GM10248 (cell line): ENCODE measurements at regions of chr18 and their contacts with region 1.

Region 1: DNA sequence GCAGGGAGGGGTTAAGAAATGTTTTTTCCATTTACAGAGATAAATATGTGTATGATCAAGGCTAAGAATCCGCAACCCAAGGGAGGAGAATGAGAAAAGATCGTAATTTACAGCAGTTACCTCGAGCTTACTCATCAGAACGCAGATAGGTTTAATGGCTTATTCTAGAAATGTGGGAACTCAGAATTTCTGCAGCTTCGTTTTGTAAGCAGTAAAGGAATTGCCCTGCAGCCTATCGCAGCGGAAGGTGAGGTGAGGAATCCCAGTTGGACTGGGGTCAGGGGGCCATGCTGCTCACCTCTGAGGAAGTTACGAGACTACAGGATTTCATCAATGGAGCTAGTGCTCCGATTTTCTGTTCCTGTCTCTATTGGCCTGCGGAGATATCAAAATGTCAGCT is 8.1 kb upstream of the TMEM200C start:
- DNase-seq: no peak
- CTCF ChIP-seq: no peak

Region 2: DNA sequence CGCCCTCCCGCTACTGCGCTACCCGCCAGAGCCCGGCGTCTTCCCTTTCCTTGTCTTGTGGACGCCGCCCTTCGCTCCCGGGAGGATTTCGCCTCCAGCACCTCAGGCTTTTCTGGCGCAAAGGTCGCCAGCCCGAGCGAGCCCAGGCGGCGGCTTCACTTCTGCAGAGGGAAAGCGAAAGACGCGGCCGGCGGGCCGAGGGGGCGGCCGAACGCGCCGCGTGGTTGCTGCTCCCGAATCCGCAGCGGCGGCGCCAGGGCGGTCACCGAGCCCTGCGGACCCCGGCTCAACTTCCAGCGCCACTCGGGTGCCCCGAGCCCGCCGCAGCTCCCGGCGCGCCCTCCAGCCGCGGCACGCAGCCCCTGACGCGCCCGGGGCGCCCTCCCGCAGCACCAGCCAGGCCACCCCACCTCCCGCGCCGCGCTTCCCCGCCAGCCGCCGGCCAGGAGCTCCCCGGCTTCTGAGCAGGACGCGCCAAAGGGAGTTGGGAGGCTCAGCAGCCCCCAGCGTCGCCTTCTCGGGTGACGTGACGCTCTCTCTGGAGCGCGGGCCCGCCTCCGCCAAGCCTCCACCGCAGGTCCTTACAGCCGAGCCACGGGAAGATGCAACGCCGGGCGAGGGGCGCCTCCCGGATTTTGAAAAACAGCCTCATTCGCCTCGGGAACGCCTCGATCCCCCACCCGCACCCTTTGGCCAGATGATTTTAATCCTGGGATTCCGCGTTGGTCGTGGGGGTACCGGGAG is 274.7 kb before region 1 on chr18:
- CTCF ChIA-PET with region 1: no interaction called
- POLR2A ChIA-PET with region 1: no interaction called
- DNase-seq: peak; percentile 45
- CTCF ChIP-seq: no peak

Region 3: DNA sequence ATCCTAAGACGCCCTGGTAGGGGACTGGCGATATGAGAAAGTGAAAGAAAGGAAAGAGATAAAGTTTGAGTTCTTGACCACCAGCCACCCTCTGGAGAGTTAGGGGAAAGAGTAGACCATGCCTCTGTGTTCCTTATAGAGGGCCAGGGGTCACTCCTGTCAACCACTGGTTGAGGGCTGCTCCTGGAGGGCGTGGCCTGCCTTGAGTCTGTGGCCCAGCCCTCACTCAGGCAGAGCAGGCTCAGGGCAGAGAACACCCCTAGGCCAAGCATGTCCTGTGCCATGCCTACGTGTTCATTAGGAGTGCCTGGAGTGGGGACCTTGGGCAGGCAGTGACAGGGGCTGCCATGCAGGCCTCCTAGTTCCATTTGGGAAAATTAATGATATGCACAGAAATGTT is 198.5 kb before region 1 on chr18:
- CTCF ChIA-PET with region 1: no interaction called
- POLR2A ChIA-PET with region 1: no interaction called
- DNase-seq: no peak
- CTCF ChIP-seq: no peak

Region 4: GRCh38 chr18:5914951-5915350 is 11.6 kb after region 1 on chr18:
- CTCF ChIA-PET with region 1: interaction called, 16 read pairs
- POLR2A ChIA-PET with region 1: no interaction called
- DNase-seq: no peak
- CTCF ChIP-seq: no peak